PC-9 (cell line): ENCODE measurements at regions of chr4 and their contacts with region 1.

Region 1: GRCh38 chr4:15197005-15197404 is 194.7 kb downstream of the CPEB2 start:
- DNase-seq: peak in 1 of 2 experiments; percentile 8
- H3K4me3 ChIP-seq: no peak overlapping the region
- H3K27ac ChIP-seq: no peak overlapping the region
- H3K4me1 ChIP-seq: no peaks in the 10 kb centered on the region
- H3K27me3 ChIP-seq: no peaks in the 10 kb centered on the region
- CTCF ChIP-seq: peak; percentile 45

Region 2: DNA sequence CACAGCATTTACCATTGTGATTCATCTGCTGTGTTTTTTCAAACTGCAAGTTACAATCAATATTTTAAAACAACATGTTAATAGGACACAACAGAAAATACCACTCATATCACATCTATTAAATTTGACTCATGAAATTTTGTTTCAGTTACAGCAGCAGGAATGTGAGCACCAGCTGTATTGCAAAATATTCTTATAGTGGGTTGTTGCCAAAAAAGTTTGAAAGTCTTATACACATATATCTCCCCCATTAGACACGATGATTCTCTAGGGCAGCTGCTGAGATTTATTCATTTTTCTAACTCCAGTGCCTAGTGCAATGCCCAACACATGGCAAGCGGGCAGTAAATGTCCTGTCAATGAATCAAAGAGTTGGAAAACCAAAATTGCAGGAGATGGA is 1626.1 kb before region 1 on chr4:
- CTCF ChIA-PET with region 1: no interaction called
- POLR2A ChIA-PET with region 1: interaction called, 18 read pairs
- intact Hi-C with region 1: no loop called
- DNase-seq: no peak
- H3K4me3 ChIP-seq: no peak overlapping the region
- H3K27ac ChIP-seq: no peak overlapping the region
- H3K4me1 ChIP-seq: no peaks in the 10 kb centered on the region
- H3K27me3 ChIP-seq: no peaks in the 10 kb centered on the region
- CTCF ChIP-seq: no peak

Region 3: GRCh38 chr4:14800977-14801376 is 396.0 kb before region 1 on chr4:
- CTCF ChIA-PET with region 1: no interaction called
- POLR2A ChIA-PET with region 1: no interaction called
- intact Hi-C with region 1: no loop called
- DNase-seq: no peak
- H3K4me3 ChIP-seq: no peak overlapping the region
- H3K27ac ChIP-seq: no peak overlapping the region
- H3K4me1 ChIP-seq: no peaks in the 10 kb centered on the region
- H3K27me3 ChIP-seq: no peaks in the 10 kb centered on the region
- CTCF ChIP-seq: no peak